CD8-positive, alpha-beta T cell (primary cell): ENCODE measurements at regions of chr20 and their contacts with region 1.

Region 1: GRCh38 chr20:62010551-62011402 is 54.9 kb downstream of the TAF4 start:
- DNase-seq: peak; percentile 35 to 79 (median 68)
- ATAC-seq: peak; percentile 86
- H3K4me3 ChIP-seq: no peak overlapping the region
- H3K4me3 Mint-ChIP-seq: no peak overlapping the region
- H3K27ac ChIP-seq: no peak overlapping the region
- H3K27ac Mint-ChIP-seq: no peak overlapping the region
- H3K4me1 ChIP-seq: no peaks in the 10 kb centered on the region
- H3K4me1 Mint-ChIP-seq: peaks cover 9% of the 10 kb centered on the region
- H3K27me3 ChIP-seq: no peaks in the 10 kb centered on the region
- H3K27me3 Mint-ChIP-seq: no peaks in the 10 kb centered on the region
- CTCF ChIP-seq: peak; percentile 89

Region 2: DNA sequence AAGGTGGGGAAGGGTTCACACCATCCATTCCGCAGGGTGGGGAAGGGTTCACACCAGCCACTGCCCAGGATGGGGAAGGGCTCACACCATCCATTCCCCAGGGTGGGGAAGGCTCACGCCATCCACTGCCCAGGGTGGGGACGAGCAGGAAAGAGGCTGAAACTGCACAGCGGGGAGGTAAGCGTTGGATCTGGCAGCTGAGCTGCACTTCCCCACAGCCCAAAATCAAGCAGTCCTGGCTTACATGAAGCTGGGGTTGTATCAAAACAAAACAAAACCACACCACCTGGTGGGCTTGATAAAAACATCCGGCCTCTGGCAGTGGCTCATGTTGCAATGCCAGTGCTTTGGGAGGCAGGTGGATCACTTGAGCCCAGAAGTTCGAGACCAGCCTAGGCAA is 213.6 kb before region 1 on chr20:
- CTCF ChIA-PET with region 1: no interaction called
- POLR2A ChIA-PET with region 1: no interaction called
- intact Hi-C with region 1: no loop called
- DNase-seq: no peak
- ATAC-seq: no peak
- H3K4me3 ChIP-seq: no peak overlapping the region
- H3K4me3 Mint-ChIP-seq: no peak overlapping the region
- H3K27ac ChIP-seq: no peak overlapping the region
- H3K27ac Mint-ChIP-seq: no peak overlapping the region
- H3K4me1 ChIP-seq: no peaks in the 10 kb centered on the region
- H3K4me1 Mint-ChIP-seq: no peaks in the 10 kb centered on the region
- H3K27me3 ChIP-seq: no peaks in the 10 kb centered on the region
- H3K27me3 Mint-ChIP-seq: peaks cover 3% of the 10 kb centered on the region
- CTCF ChIP-seq: no peak

Region 3: GRCh38 chr20:61991476-61991875 is 19.3 kb before region 1 on chr20:
- CTCF ChIA-PET with region 1: no interaction called
- POLR2A ChIA-PET with region 1: no interaction called
- intact Hi-C with region 1: no loop called
- DNase-seq: no peak
- ATAC-seq: no peak
- H3K4me3 ChIP-seq: no peak overlapping the region
- H3K4me3 Mint-ChIP-seq: no peak overlapping the region
- H3K27ac ChIP-seq: no peak overlapping the region
- H3K27ac Mint-ChIP-seq: no peak overlapping the region
- H3K4me1 ChIP-seq: no peaks in the 10 kb centered on the region
- H3K4me1 Mint-ChIP-seq: peaks cover 2% of the 10 kb centered on the region
- H3K27me3 ChIP-seq: no peaks in the 10 kb centered on the region
- H3K27me3 Mint-ChIP-seq: no peaks in the 10 kb centered on the region
- CTCF ChIP-seq: no peak

Region 4: DNA sequence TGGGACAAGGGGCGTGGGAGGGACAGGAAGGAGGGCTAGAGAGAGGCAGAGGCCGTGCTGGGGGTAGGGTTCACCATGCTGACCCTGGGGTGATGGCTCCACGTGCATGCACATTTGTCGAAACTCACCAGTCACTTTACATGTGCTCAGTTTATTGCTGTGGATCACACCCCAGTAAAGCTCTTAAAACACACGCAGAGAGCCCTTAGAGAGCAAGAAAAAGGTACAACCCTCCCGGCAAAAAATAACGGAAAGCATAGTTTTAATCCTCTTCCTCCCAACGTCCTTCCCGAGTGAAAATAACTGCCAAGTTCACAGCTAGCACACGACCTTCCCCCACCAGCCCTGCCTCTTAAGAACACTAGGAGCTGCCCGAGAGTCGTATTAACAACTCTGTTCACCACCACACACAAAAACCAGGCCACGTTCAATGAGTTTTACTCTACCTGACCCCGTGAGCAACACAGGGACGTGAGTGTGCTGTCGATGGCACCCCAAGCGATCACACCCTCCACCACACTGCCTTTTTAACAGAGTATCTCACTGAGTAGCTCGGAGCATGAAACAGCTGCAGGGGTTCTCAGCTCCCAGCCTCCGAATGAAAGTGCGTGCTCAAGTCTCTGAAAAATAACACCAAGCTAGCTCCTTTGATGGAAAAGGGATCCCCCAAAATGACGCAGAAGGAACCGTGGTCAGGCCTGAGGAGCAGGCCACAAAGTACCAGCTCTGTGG is 15.2 kb after region 1 on chr20:
- CTCF ChIA-PET with region 1: interaction called, 19 read pairs
- POLR2A ChIA-PET with region 1: no interaction called
- intact Hi-C with region 1: no loop called
- DNase-seq: peak in 7 of 9 experiments; percentile 4 to 64 (median 27)
- ATAC-seq: peak; percentile 85
- H3K4me3 ChIP-seq: no peak overlapping the region
- H3K4me3 Mint-ChIP-seq: peak overlapping the region; percentile 12
- H3K27ac ChIP-seq: no peak overlapping the region
- H3K27ac Mint-ChIP-seq: peak overlapping the region; percentile 58
- H3K4me1 ChIP-seq: peaks cover 20% of the 10 kb centered on the region
- H3K4me1 Mint-ChIP-seq: peaks cover 54% of the 10 kb centered on the region
- H3K27me3 ChIP-seq: no peaks in the 10 kb centered on the region
- H3K27me3 Mint-ChIP-seq: no peaks in the 10 kb centered on the region
- CTCF ChIP-seq: peak; percentile 48

Region 5: DNA sequence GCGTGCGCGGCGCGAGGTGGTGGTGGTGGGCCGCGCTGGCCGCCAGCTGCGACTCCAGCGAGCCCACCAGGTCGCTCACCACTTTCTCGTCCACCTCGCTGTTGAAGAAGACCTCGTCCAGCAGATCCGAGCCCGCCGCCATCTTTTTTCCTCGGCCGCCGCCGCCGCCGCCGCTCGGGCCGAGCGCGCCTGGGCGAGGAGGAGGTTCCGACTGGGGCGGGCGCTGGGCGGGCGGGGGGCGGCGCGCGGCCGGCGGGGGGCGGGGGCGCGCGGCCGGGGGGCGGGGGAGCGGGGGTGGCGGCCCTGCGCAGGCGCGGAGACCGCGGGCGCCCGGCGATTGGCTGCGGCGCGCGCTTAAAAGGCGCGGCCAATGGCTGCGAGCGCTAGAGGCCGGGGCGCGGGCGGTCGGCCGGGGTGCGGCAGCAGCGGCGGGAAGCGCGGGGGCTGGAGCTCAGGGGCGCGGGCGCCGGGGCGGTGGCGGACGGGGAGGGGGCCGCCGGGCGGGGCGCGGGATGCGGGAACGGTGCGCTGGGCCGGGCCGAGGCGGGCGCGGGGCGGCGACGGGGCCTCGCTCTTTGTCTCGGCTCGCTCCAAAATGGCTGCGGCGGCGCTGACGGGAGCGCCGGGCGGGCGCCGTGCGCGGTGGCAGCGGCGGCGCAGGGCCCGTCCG is 55.0 kb after region 1 on chr20 and contains the start of gene TAF4:
- CTCF ChIA-PET with region 1: interaction called, 10 read pairs
- POLR2A ChIA-PET with region 1: interaction called, 5 read pairs
- intact Hi-C with region 1: loop called in 1 of 2 experiments (anchors 5 kb)
- DNase-seq: peak; percentile 69 to 92 (median 79)
- ATAC-seq: peak; percentile 77
- H3K4me3 ChIP-seq: peak within 1 kb of the TSS; percentile 54 to 70
- H3K4me3 Mint-ChIP-seq: peak within 1 kb of the TSS; percentile 90
- H3K27ac ChIP-seq: peak within 1 kb of the TSS; percentile 47 to 74
- H3K27ac Mint-ChIP-seq: peak within 1 kb of the TSS; percentile 95
- H3K4me1 ChIP-seq: peaks cover 42% of the 10 kb centered on the region
- H3K4me1 Mint-ChIP-seq: peaks cover 52% of the 10 kb centered on the region
- H3K27me3 ChIP-seq: no peaks in the 10 kb centered on the region
- H3K27me3 Mint-ChIP-seq: no peaks in the 10 kb centered on the region
- CTCF ChIP-seq: no peak
- total RNA-seq, gene TAF4: 9.8 to 14.1 TPM

Region 6: DNA sequence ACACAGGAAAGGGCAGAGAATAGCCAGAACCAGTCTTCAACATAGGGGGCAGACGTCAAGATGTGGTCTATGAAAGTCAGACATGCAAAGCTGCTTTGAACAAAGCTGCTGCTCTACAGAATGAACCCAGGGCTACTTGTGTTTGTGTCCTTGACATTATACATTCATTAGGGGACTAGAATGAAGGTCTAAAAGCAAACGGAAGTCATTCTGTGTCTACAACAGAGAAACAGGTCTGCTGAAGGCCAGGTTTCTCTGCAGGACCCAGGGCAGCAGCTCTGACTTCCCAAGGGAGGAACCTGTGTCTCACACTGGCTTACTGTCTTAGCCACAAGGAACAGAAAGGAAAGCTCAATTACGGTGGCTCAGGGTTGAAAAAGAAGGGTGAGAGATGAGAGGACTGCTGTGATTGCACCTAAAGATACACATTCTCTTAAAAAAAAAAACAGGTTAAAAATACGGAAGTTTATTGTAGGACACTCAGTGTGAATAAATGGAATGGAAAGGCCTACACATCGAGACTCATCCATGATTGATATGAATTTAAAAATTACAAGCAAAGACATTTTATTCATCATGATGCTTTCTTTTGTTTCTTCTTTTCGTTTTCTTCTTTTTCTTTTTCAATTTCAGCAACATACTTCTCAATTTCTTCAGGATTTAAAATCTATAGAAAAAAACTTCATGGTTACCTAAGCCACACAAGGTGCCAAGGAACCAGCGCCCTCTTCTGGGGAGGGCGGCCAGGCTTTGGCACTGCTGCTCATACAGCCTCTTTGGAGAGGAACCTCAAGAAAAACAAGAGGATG is 125.7 kb after region 1 on chr20:
- CTCF ChIA-PET with region 1: interaction called, 82 read pairs
- POLR2A ChIA-PET with region 1: interaction called, 4 read pairs
- intact Hi-C with region 1: loop called (anchors 1 kb)
- DNase-seq: peak; percentile 59 to 86 (median 78)
- ATAC-seq: peak; percentile 61
- H3K4me3 ChIP-seq: no peak overlapping the region
- H3K4me3 Mint-ChIP-seq: no peak overlapping the region
- H3K27ac ChIP-seq: no peak overlapping the region
- H3K27ac Mint-ChIP-seq: peak overlapping the region; percentile 90
- H3K4me1 ChIP-seq: peaks cover 21% of the 10 kb centered on the region
- H3K4me1 Mint-ChIP-seq: peaks cover 42% of the 10 kb centered on the region
- H3K27me3 ChIP-seq: no peaks in the 10 kb centered on the region
- H3K27me3 Mint-ChIP-seq: no peaks in the 10 kb centered on the region
- CTCF ChIP-seq: peak; percentile 80

Region 7: DNA sequence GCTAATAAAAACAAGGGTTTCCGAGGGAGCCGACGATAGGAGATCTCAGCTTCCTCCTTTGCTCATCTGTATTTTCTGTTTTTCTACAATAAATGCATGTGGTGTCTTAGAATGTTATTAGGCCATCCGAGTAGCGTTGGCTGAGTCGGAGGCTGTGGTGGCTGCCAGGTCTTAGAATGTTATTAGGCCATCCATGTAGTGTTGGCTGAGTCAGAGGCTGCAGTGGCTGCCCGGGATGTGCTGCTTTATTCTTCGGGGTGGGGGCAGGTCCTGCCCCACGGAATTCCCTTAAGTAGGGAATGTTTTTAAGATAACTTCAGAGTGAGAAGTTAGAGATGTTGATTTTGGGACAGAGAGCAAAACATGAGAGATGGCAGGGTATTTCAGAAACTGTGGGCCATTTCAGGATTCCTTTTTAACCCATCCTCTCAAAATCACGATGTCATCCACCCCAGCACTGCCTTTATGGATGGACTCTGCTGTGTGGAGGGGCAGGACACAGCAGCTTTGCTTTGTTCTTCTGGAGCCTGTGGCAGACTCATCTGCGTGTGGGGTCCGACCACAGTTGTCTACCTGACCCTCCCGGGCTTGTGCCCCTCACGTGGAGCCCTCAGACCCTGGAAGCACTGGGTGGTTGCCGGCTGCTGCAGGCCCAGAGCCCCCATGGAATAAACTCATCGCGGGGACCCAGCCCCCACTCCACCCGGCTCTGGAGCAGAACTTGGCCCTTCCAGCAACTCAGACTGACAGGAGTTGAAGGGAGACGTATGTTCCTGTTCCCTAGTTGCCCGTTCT is 247.9 kb after region 1 on chr20:
- CTCF ChIA-PET with region 1: interaction called, 3 read pairs
- POLR2A ChIA-PET with region 1: no interaction called
- intact Hi-C with region 1: loop called in 1 of 2 experiments (anchors 10 kb)
- DNase-seq: no peak
- ATAC-seq: no peak
- H3K4me3 ChIP-seq: no peak overlapping the region
- H3K4me3 Mint-ChIP-seq: no peak overlapping the region
- H3K27ac ChIP-seq: no peak overlapping the region
- H3K27ac Mint-ChIP-seq: no peak overlapping the region
- H3K4me1 ChIP-seq: no peaks in the 10 kb centered on the region
- H3K4me1 Mint-ChIP-seq: peaks cover 4% of the 10 kb centered on the region
- H3K27me3 ChIP-seq: no peaks in the 10 kb centered on the region
- H3K27me3 Mint-ChIP-seq: no peaks in the 10 kb centered on the region
- CTCF ChIP-seq: no peak